ENCODE measurements at regions of chrX and their contacts with region 1.

Region 1: DNA sequence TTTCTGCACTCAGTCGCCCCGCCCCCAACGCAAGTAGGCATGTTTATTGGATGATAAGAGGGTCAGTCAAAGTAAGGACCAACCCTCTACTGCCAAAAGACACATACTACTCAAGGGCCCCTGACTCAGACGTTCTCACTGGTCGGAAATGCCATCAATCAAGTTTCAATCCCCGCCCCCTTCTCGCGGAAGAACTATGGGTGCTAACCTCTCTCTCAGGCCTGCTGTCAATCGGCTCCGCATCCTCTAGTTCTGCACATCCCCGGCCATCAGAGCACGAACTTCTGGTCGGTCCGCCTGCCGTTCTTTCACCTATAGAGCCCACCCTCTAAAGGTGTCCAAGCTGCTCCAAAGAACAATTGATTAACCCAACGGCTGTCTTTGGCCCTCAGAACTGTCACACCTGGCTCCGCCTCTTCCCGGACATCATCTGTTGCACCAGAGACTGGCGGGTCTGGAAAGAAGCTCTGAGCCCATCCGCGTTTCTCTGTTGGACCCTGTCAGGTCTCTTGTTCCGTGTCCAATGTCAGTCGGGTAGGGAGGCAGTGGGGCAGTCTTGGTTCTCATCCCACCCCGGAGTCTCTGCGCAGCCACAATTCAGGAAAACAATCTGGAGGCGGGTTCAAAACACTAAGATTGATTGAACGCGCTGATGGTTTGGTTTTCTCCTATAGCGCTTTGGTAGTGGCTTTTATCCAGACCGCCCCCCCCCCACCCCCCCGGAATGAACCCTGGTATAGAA is 15.2 kb downstream of the NDUFB11 start:
- DNase-seq: peak; percentile 91 to 99 (median 94)
- H3K4me3 ChIP-seq: peak overlapping the region in 2 of 4 donors; percentile 40 to 58
- H3K27ac ChIP-seq: peak overlapping the region; percentile 69 to 90 (median 85)
- H3K4me1 ChIP-seq: no peaks in the 10 kb centered on the region
- H3K27me3 ChIP-seq: peaks cover 3% of the 10 kb centered on the region
- CTCF ChIP-seq: no peak
- POLR2A ChIP-seq: peak in 1 of 2 donors; percentile 36

Region 2: DNA sequence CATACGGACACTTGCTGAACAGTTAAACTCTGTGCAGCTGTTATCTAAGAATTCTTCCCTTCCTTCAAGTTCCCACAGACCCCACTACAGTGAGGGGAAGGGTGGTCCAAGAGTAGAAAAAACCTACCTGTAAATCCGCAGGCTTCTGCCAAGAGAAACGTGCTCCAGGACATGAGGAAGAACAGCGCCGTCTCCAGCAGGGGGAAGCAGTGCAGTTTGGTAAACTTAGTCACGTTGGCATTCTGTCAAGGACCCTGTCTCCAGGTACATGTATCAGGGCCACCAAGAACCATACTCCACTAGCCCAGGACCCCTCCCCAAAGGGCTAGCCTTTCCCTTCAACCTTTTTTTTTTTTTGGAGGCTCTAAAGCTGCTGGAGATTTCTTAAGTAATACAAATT is 475.8 kb before region 1 on chrX:
- intact Hi-C with region 1: no loop called
- DNase-seq: no peak
- H3K4me3 ChIP-seq: no peak overlapping the region
- H3K27ac ChIP-seq: no peak overlapping the region
- H3K4me1 ChIP-seq: peaks cover 0 to 10% of the 10 kb centered on the region in 2 donors
- H3K27me3 ChIP-seq: peaks cover 17% of the 10 kb centered on the region
- CTCF ChIP-seq: peak in 1 of 6 experiments; percentile 6
- POLR2A ChIP-seq: no peak

Region 3: GRCh38 chrX:47187106-47187677 is 57.9 kb after region 1 on chrX:
- intact Hi-C with region 1: loop called in 1 of 2 experiments (anchors 10 kb)
- DNase-seq: peak in 4 of 7 donors; percentile 39 to 67 (median 58)
- H3K4me3 ChIP-seq: no peak overlapping the region
- H3K27ac ChIP-seq: peak overlapping the region in 1 of 5 donors; percentile 10
- H3K4me1 ChIP-seq: no peaks in the 10 kb centered on the region
- H3K27me3 ChIP-seq: peaks cover under 1% of the 10 kb centered on the region
- CTCF ChIP-seq: no peak
- POLR2A ChIP-seq: no peak